PC-3 (cell line): ENCODE measurements at regions of chr14 and their contacts with region 1.

Region 1: DNA sequence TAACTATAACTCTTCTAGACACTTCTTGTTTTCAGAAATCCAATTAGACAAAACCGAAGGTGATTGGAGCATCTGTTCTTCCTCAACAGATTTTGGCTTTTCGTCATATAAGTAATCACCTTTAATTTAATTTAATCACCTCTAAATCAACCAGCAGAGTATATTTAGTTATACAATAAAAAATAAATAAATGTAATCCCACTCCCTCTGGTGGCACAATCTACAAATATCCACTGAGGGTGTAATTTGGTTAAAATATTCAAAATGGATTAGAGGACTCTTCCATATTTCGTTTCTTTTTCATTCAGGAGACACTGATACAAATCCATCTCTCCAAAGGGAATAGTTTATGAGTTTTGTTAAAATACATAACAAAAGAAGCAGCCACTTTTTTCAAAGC is 18.3 kb upstream of the SLC35F4 start:
- DNase-seq: peak; percentile 61
- ATAC-seq: peak; percentile 50; the same call in 1 of the 2 replicates
- H3K4me3 ChIP-seq: no peak overlapping the region
- H3K27ac ChIP-seq: no peak overlapping the region
- H3K4me1 ChIP-seq: no peaks in the 10 kb centered on the region
- H3K27me3 ChIP-seq: peaks cover 72% of the 10 kb centered on the region
- CTCF ChIP-seq: peak; percentile 86

Region 2: GRCh38 chr14:57268161-57269069 is 615.8 kb before region 1 on chr14 and contains the starts of genes AP5M1 and EXOC5:
- CTCF ChIA-PET with region 1: no interaction called
- POLR2A ChIA-PET with region 1: no interaction called
- intact Hi-C with region 1: no loop called
- DNase-seq: peak; percentile 100
- ATAC-seq: peak; percentile 81
- H3K4me3 ChIP-seq: peak within 1 kb of the TSS; percentile 77
- H3K27ac ChIP-seq: peak within 1 kb of the TSS; percentile 73
- H3K4me1 ChIP-seq: peaks cover 40% of the 10 kb centered on the region
- H3K27me3 ChIP-seq: no peaks in the 10 kb centered on the region
- CTCF ChIP-seq: peak; percentile 21; the same call in 1 of the 2 replicates
- total RNA-seq, gene AP5M1: 41.3 and 48.7 TPM in 2 replicates
- total RNA-seq, gene EXOC5: 109 TPM in 2 replicates

Region 3: DNA sequence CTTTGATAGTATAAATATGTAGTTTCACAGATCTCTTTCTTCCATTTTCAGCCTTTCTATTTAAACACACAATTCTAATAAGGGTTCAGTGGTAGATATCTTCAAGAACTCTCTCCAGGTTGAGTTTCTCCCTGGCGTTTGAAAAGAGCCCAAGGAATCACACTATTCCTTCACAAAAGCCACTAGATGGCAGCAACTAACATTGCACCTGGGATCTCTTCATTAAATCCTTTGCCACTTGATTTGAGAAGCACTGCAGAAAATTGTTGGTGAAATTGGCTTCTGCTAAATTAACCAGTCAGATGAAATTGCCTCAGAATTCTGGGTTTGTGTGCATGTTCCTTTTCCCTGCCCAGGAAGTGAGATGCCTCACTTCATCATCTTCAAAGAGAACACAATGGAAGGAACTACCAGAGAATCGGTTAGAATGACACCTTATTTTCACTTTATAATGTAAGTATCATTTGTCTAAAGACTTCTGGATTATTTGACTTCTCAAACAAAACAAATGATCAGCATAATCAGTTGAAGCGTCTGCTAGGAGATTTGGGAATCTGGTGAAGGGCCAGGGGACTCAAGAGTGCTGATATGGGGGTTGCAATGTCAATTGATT is 397.3 kb before region 1 on chr14:
- CTCF ChIA-PET with region 1: no interaction called
- POLR2A ChIA-PET with region 1: no interaction called
- intact Hi-C with region 1: loop called (anchors 1 kb)
- DNase-seq: peak; percentile 86
- ATAC-seq: peak; percentile 89
- H3K4me3 ChIP-seq: no peak overlapping the region
- H3K27ac ChIP-seq: no peak overlapping the region
- H3K4me1 ChIP-seq: no peaks in the 10 kb centered on the region
- H3K27me3 ChIP-seq: peaks cover 54% of the 10 kb centered on the region
- CTCF ChIP-seq: peak; percentile 99

Region 4: DNA sequence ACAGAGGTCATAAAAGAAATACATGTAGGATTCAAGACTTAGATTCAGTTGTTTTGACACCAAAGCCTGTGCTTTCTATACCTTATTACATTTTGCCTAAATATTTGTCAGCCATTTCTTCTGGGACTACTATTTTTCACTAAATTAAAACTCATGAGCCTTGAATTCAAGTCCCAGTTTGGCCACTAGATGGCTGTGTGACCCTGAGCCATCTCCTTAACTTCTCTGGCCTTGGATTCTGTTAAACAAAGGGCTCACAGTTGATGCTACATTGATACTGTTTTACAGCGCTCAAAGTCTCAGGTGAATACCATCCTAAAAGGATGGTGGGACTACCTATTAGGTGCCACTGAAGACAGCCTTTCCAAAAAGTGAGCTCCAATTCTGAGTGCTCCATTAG is 351.0 kb before region 1 on chr14:
- CTCF ChIA-PET with region 1: no interaction called
- POLR2A ChIA-PET with region 1: no interaction called
- intact Hi-C with region 1: loop called (anchors 5 kb)
- DNase-seq: peak; percentile 83
- ATAC-seq: peak; percentile 70
- H3K4me3 ChIP-seq: no peak overlapping the region
- H3K27ac ChIP-seq: no peak overlapping the region
- H3K4me1 ChIP-seq: no peaks in the 10 kb centered on the region
- H3K27me3 ChIP-seq: peaks cover 28% of the 10 kb centered on the region
- CTCF ChIP-seq: peak; percentile 96

Region 5: DNA sequence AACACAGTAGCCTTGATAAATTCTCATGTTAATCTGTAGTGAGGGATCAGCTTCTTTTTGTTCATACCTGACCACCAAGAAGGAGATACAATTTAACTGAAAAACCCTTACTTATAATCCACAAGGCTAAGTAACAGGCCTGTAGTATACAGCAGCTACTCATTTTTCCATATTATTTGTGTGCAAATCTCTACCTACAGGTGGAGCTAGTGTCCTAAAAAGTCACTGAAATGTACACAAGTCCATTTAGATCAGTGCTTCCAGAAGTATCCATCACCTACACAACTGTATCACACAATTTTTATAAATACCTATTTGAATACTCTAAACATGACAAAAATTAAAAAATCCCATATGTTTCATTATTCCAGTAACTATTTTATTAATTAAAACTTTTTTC is 191.5 kb before region 1 on chr14:
- CTCF ChIA-PET with region 1: no interaction called
- POLR2A ChIA-PET with region 1: no interaction called
- intact Hi-C with region 1: loop called (anchors 1 kb)
- DNase-seq: peak; percentile 94
- ATAC-seq: peak; percentile 98
- H3K4me3 ChIP-seq: no peak overlapping the region
- H3K27ac ChIP-seq: no peak overlapping the region
- H3K4me1 ChIP-seq: no peaks in the 10 kb centered on the region
- H3K27me3 ChIP-seq: peaks cover 24% of the 10 kb centered on the region
- CTCF ChIP-seq: peak; percentile 99